Colonic mucosa (tissue), 4 donors: ENCODE measurements at regions of chr5 and their contacts with region 1.

Region 1: DNA sequence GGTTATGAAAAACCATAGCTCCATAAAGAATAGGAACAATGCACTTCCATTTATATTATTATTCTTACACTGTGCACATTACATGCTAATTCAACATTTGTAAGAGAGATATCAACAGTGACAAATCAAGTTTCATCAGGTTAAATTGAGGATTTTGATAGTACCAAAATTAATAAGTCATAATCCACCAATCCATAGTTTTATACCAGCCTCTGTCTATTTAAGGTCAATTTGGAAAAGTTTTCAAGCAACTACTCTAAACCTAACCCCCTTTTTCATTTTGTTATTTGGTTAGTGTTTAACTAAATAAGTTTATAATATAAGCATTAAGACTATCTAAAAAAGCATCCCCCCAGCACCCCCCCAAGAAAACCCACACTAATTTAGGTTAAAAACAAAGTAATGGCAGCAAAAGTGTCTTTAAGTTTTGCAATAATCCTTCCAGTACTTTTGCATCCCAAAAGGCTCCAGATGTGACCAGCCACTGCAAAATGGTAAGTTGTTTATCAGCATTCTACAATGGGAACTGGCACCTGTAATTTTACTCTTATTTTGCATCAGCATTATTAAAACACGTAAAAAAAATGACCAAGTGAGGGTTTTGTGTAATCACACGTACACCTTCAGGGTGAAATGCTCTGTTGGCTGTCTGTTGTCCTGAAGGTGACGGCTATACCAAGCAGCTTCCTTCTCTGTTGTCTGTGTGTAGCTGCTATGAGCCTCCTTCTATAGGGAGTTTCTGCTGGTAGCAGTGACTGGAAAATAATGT is 36.8 kb upstream of the SSBP2 start:
- DNase-seq: peak; percentile 63
- H3K4me3 ChIP-seq: no peak overlapping the region
- H3K27ac ChIP-seq: peak overlapping the region; percentile 10
- H3K4me1 ChIP-seq: no peaks in the 10 kb centered on the region
- H3K27me3 ChIP-seq: no peaks in the 10 kb centered on the region
- CTCF ChIP-seq: no peak

Region 2: GRCh38 chr5:81572201-81572600 is 215.5 kb before region 1 on chr5:
- intact Hi-C with region 1: no loop called
- DNase-seq: no peak
- H3K4me3 ChIP-seq: no peak overlapping the region
- H3K27ac ChIP-seq: no peak overlapping the region
- H3K4me1 ChIP-seq: no peaks in the 10 kb centered on the region
- H3K27me3 ChIP-seq: no peaks in the 10 kb centered on the region
- CTCF ChIP-seq: no peak

Region 3: DNA sequence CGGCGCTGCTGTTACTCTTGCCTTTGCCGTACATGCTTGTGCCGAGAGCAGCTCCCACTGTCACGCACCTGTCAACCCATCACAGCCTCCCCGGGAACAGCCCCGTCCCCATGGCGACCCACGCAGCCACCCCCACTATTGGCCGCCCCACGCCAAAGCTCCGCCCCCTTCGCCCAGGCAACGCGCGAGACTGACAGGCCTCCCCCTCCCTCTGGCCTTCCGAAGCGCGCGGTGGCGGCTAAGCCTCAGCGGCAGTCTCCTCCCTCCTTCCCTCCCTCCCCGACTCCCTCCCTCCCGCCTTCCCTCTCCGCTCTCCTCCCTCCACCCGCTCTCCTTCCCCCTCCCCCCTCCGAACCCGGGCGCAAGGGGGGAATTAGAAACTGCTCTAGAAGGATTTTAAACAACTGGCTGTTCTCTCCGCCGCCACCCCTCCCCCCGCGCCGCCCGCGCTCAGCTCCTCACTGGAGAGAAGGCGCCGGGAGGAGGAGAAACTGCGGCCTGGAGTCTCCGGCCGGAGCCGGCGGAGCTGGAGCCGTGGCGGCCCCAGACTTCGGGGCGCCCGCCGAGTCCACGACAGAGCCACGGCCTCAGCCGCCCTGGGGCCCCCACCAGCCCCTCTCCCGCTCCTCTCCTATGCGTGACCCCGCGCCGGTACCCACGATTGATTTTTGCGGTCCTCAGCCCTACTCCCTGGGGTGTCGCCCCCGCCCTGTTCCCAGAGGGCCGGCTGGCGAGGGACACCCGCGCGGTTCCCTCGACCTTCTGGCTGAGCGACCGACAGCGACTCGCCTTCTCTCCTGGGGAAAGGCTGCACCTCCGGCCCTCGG is 36.4 kb before region 1 on chr5 and contains the start of gene SSBP2:
- intact Hi-C with region 1: loop called (anchors 2 kb)
- DNase-seq: peak; percentile 100
- H3K4me3 ChIP-seq: peak within 1 kb of the TSS; percentile 64
- H3K27ac ChIP-seq: peak within 1 kb of the TSS; percentile 84
- H3K4me1 ChIP-seq: no peaks in the 10 kb centered on the region
- H3K27me3 ChIP-seq: no peaks in the 10 kb centered on the region
- CTCF ChIP-seq: no peak
- total RNA-seq, gene SSBP2: 11.1 to 28.0 TPM